ENCODE measurements at regions of chr21 and their contacts with region 1.

Region 1: DNA sequence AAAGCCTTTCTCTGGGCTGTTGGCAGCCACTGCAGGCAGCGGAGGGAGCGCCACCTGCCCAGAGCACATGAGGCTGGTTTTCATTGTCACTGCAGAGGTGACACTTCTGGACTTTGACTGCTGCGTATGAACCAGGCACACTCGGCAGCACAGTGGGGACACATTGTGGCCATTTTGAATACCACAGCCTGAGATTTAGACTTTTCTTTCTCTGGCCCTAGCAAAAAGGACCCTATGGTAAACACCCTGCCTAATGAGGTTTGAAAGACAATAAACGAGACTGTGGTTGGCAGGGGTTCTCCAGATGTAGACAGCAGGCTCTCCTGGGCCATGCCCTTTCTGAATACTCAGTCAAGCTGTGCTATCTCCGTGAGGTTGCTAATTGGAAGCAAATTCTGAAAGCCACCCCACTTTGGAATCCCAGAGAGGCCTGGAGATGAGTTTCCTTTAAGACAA is 12.0 kb upstream of the KCNE2 start:
- DNase-seq: peak; percentile 46
- ATAC-seq: peak; percentile 84
- H3K4me3 Mint-ChIP-seq: no peak overlapping the region
- H3K27ac Mint-ChIP-seq: no peak overlapping the region
- H3K4me1 Mint-ChIP-seq: peaks cover 9% of the 10 kb centered on the region
- H3K27me3 Mint-ChIP-seq: peaks cover 10% of the 10 kb centered on the region
- CTCF ChIP-seq: peak; percentile 57

Region 2: GRCh38 chr21:34129039-34129891 is 222.5 kb before region 1 on chr21:
- CTCF ChIA-PET with region 1: interaction called, 11 read pairs
- POLR2A ChIA-PET with region 1: no interaction called
- intact Hi-C with region 1: no loop called
- DNase-seq: peak; percentile 90
- ATAC-seq: peak; percentile 92
- H3K4me3 Mint-ChIP-seq: peak overlapping the region; percentile 58
- H3K27ac Mint-ChIP-seq: peak overlapping the region; percentile 92
- H3K4me1 Mint-ChIP-seq: peaks cover 80% of the 10 kb centered on the region
- H3K27me3 Mint-ChIP-seq: no peaks in the 10 kb centered on the region
- CTCF ChIP-seq: no peak

Region 3: DNA sequence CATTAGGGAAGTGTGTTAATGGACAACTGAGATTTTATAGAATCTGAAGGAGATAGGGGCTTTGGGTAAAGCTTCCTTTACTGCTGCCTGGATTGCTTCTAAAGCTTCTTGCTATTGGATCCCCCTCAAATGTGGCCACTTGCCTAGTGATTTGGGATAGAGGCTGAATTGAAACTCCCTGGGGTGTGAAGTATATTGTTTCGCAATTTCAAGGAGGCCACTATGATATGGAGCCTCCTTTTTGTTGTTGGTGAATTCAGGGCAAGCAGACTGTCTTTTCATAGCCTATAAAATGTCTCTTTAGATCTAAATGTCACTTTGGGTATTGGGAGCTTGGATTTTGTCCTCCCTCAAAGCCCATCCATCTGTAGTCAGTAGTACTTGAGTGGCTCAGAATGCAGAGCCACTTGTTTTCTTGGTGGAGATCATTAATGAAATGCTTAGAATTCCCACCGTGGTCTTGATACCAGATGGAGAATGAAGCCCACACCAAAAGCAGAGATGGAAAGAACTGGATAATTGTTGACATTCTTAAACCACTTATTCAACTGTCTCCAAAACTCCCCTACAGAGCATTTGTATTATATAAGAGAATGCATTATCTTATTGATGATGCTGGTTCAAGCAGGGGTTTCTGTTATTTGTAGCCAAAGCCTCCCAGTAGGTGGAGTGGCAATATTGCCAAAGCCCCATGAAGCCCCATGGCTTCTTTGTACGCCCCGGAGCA is 132.3 kb before region 1 on chr21:
- CTCF ChIA-PET with region 1: interaction called, 10 read pairs
- POLR2A ChIA-PET with region 1: no interaction called
- intact Hi-C with region 1: no loop called
- DNase-seq: no peak
- ATAC-seq: no peak
- H3K4me3 Mint-ChIP-seq: no peak overlapping the region
- H3K27ac Mint-ChIP-seq: no peak overlapping the region
- H3K4me1 Mint-ChIP-seq: peaks cover 12% of the 10 kb centered on the region
- H3K27me3 Mint-ChIP-seq: no peaks in the 10 kb centered on the region
- CTCF ChIP-seq: no peak

Region 4: GRCh38 chr21:34336756-34337391 is 14.9 kb before region 1 on chr21:
- CTCF ChIA-PET with region 1: interaction called, 38 read pairs
- POLR2A ChIA-PET with region 1: no interaction called
- intact Hi-C with region 1: no loop called
- DNase-seq: no peak
- ATAC-seq: no peak
- H3K4me3 Mint-ChIP-seq: no peak overlapping the region
- H3K27ac Mint-ChIP-seq: no peak overlapping the region
- H3K4me1 Mint-ChIP-seq: peaks cover 11% of the 10 kb centered on the region
- H3K27me3 Mint-ChIP-seq: peaks cover 2% of the 10 kb centered on the region
- CTCF ChIP-seq: no peak

Region 5: DNA sequence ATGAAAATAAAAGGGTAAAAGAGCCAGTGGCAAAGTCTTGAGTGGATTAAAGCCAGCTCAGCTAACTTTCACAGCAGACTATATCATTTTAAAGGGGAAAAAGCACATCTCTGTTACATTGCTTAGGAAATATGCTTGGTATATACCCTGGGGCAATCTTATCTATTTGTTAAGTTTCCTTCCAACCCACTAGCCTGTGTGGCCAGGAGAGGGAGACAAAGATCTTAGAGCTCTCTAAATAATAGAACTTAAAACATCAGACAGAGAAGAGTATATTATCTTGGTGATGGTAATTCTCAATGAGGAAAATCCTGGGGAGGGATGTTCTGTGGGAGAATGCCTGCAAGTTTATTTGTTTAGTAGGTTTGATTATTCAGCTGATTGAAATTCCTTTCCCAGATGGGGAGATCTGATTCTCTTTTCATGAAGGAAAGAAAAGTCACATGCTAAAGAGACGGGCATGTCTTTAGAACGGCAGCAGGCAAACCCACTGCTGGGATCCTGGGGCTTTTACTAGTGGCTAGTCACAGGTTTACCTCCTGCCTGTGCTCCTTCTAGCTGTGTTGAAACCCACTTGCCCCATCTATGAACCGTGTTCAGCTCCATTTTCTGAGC is 15.6 kb after region 1 on chr21:
- CTCF ChIA-PET with region 1: interaction called, 27 read pairs
- POLR2A ChIA-PET with region 1: no interaction called
- intact Hi-C with region 1: no loop called
- DNase-seq: peak; percentile 71
- ATAC-seq: peak; percentile 60
- H3K4me3 Mint-ChIP-seq: no peak overlapping the region
- H3K27ac Mint-ChIP-seq: no peak overlapping the region
- H3K4me1 Mint-ChIP-seq: peaks cover 2% of the 10 kb centered on the region
- H3K27me3 Mint-ChIP-seq: peaks cover 5% of the 10 kb centered on the region
- CTCF ChIP-seq: peak; percentile 66